Activated CD4-positive, alpha-beta T cell treated with anti-CD3 and anti-CD28 coated beads for 36 hours (primary cell): ENCODE measurements at regions of chr11 and their contacts with region 1.

Region 1: GRCh38 chr11:18526521-18527296 is at the start of gene TSG101:
- DNase-seq: peak; percentile 95
- ATAC-seq: peak; percentile 90
- H3K4me3 Mint-ChIP-seq: peak within 1 kb of the TSS; percentile 99
- H3K27ac Mint-ChIP-seq: peak within 1 kb of the TSS; percentile 100
- H3K4me1 Mint-ChIP-seq: peaks cover 49% of the 10 kb centered on the region
- H3K27me3 Mint-ChIP-seq: no peaks in the 10 kb centered on the region
- total RNA-seq, gene TSG101: 39.2 to 85.0 TPM

Region 2: GRCh38 chr11:18105802-18106574 is 420.7 kb before region 1 on chr11 and contains the start of gene SAAL1:
- CTCF ChIA-PET with region 1: interaction called, 4 read pairs
- POLR2A ChIA-PET with region 1: no interaction called
- intact Hi-C with region 1: loop called in 1 of 2 experiments (anchors 2 kb)
- DNase-seq: peak; percentile 95
- ATAC-seq: peak; percentile 97
- H3K4me3 Mint-ChIP-seq: peak within 1 kb of the TSS; percentile 82
- H3K27ac Mint-ChIP-seq: peak within 1 kb of the TSS; percentile 85
- H3K4me1 Mint-ChIP-seq: peaks cover 37% of the 10 kb centered on the region
- H3K27me3 Mint-ChIP-seq: peaks cover 3% of the 10 kb centered on the region
- total RNA-seq, gene SAAL1: 37.4 to 40.9 TPM

Region 3: GRCh38 chr11:18395735-18396504 is 130.8 kb before region 1 on chr11:
- CTCF ChIA-PET with region 1: no interaction called
- POLR2A ChIA-PET with region 1: interaction called, 7 read pairs
- intact Hi-C with region 1: loop called (anchors 1 to 2 kb)
- DNase-seq: peak; percentile 96
- ATAC-seq: peak; percentile 65
- H3K4me3 Mint-ChIP-seq: peak overlapping the region; percentile 97
- H3K27ac Mint-ChIP-seq: peak overlapping the region; percentile 99
- H3K4me1 Mint-ChIP-seq: peaks cover 65% of the 10 kb centered on the region
- H3K27me3 Mint-ChIP-seq: no peaks in the 10 kb centered on the region

Region 4: GRCh38 chr11:18615628-18616392 is 89.1 kb after region 1 on chr11:
- CTCF ChIA-PET with region 1: no interaction called
- POLR2A ChIA-PET with region 1: interaction called, 3 read pairs
- intact Hi-C with region 1: loop called in 1 of 2 experiments (anchors 1 kb)
- DNase-seq: no peak
- ATAC-seq: peak; percentile 83
- H3K4me3 Mint-ChIP-seq: peak overlapping the region; percentile 13
- H3K27ac Mint-ChIP-seq: peak overlapping the region; percentile 91
- H3K4me1 Mint-ChIP-seq: peaks cover 48% of the 10 kb centered on the region
- H3K27me3 Mint-ChIP-seq: no peaks in the 10 kb centered on the region

Region 5: GRCh38 chr11:18698341-18699268 is 171.9 kb after region 1 on chr11 and contains the start of gene TMEM86A:
- CTCF ChIA-PET with region 1: no interaction called
- POLR2A ChIA-PET with region 1: no interaction called
- intact Hi-C with region 1: loop called in 1 of 2 experiments (anchors 1 kb)
- DNase-seq: peak; percentile 93
- ATAC-seq: peak; percentile 96
- H3K4me3 Mint-ChIP-seq: peak within 1 kb of the TSS; percentile 72
- H3K27ac Mint-ChIP-seq: peak within 1 kb of the TSS; percentile 69
- H3K4me1 Mint-ChIP-seq: peaks cover 13% of the 10 kb centered on the region
- H3K27me3 Mint-ChIP-seq: peaks cover 3% of the 10 kb centered on the region
- total RNA-seq, gene TMEM86A: 0.09 to 0.26 TPM

Region 6: DNA sequence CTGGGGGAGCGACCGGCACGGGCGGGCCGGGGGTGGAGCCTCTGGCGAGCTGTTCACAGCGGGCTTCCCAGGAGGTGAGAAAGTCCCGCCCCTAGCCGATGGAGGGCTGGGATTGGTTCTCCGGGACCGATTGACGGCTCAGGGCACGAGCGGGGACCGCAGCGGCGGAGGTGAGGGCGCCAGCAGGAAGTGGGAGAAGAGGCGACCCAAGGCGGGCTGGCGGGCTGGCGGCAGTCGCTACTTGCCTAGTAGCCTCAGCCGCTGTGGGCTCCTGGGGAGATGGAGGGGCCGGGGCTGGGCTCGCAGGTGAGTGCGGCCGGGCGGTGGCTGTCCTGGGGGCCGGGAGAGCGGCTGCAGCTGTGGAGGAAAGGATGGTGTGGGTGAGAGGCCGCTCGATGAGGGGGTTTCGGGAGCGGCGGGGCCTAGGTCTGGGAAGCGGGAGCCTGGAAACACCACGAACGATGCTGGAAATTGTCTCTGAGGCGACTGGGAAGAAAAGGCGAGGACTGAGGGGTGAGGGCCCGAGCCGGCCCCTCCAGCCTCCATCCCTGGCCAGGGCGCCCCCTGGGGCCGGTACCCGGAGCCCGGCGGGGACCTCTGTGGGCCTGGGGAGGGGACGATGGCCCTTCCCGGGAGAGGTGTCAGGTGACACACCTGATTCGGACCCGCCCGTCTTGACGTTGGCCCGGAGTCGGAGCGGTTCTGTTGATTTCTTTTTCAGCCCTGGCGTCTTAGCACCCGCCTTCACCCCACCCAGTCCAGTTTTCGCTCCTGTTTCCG is 590.5 kb after region 1 on chr11 and contains the start of gene ZDHHC13:
- CTCF ChIA-PET with region 1: no interaction called
- POLR2A ChIA-PET with region 1: no interaction called
- intact Hi-C with region 1: loop called in 1 of 2 experiments (anchors 2 kb)
- DNase-seq: peak; percentile 97
- ATAC-seq: peak; percentile 99
- H3K4me3 Mint-ChIP-seq: peak within 1 kb of the TSS; percentile 89
- H3K27ac Mint-ChIP-seq: peak within 1 kb of the TSS; percentile 87
- H3K4me1 Mint-ChIP-seq: peaks cover 51% of the 10 kb centered on the region
- H3K27me3 Mint-ChIP-seq: no peaks in the 10 kb centered on the region
- total RNA-seq, gene ZDHHC13: 22.9 to 25.9 TPM